Naive thymus-derived CD4-positive, alpha-beta T cell (primary cell): ENCODE measurements at regions of chr1 and their contacts with region 1.

Region 1: GRCh38 chr1:40774266-40774998 is 9.2 kb upstream of the KCNQ4 start:
- DNase-seq: peak; percentile 46 to 70 (median 54)
- ATAC-seq: peak; percentile 72
- H3K4me3 ChIP-seq: no peak overlapping the region
- H3K4me3 Mint-ChIP-seq: no peak overlapping the region
- H3K27ac ChIP-seq: no peak overlapping the region
- H3K27ac Mint-ChIP-seq: peak overlapping the region in 3 of 9 donors; percentile 1 to 61 (median 10)
- H3K4me1 ChIP-seq: no peaks in the 10 kb centered on the region
- H3K4me1 Mint-ChIP-seq: peaks cover 0 to 25% (median 2%) of the 10 kb centered on the region in 7 donors
- H3K27me3 ChIP-seq: no peaks in the 10 kb centered on the region
- H3K27me3 Mint-ChIP-seq: no peaks in the 10 kb centered on the region

Region 2: DNA sequence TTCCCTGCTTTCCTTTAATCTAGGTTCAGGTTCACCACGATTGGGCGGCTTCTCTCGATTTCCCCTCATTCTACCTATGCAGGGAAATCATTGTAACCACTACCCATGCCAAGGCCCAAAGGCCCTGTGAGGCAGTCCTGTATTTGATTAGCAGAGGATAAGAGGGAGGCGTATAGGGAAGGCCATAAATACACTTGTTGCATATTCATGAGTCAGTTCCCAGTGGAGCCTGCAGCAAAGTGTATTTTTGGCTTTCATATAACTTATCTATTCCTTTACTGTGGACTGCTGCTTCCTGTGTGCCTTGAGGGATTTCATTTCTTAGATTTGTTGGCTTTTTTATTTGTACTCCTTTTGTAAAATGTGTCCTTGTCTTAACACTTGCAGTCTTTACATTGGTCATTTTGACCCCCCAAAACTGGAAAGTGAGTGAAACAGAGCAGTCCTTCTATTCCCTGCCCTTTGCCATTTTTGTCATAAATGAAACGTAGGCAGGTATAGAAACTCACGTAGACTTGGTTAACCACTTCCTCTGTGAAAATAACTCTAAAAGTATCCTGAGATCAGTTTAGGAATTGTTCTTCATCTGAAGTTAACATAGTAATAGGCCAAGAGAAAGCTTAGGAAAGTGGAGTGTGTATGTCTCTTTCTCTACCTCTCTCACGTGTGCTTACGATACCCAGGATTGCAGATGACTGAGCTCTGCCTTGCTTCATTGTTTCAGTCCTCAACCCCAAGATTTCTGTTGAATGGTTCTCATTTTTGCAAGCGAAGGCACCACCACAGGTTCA is 10.5 kb before region 1 on chr1:
- CTCF ChIA-PET with region 1: interaction called, 11 read pairs
- POLR2A ChIA-PET with region 1: interaction called, 3 read pairs
- intact Hi-C with region 1: no loop called
- DNase-seq: peak in 6 of 9 donors; percentile 19 to 48 (median 39)
- ATAC-seq: peak; percentile 56
- H3K4me3 ChIP-seq: no peak overlapping the region
- H3K4me3 Mint-ChIP-seq: peak overlapping the region; percentile 12 to 81 (median 62)
- H3K27ac ChIP-seq: peak overlapping the region; percentile 60
- H3K27ac Mint-ChIP-seq: peak overlapping the region; percentile 75 to 91 (median 89)
- H3K4me1 ChIP-seq: peaks cover 0 to 31% of the 10 kb centered on the region in 2 donors
- H3K4me1 Mint-ChIP-seq: peaks cover 22 to 52% (median 46%) of the 10 kb centered on the region in 7 donors
- H3K27me3 ChIP-seq: no peaks in the 10 kb centered on the region
- H3K27me3 Mint-ChIP-seq: no peaks in the 10 kb centered on the region

Region 3: DNA sequence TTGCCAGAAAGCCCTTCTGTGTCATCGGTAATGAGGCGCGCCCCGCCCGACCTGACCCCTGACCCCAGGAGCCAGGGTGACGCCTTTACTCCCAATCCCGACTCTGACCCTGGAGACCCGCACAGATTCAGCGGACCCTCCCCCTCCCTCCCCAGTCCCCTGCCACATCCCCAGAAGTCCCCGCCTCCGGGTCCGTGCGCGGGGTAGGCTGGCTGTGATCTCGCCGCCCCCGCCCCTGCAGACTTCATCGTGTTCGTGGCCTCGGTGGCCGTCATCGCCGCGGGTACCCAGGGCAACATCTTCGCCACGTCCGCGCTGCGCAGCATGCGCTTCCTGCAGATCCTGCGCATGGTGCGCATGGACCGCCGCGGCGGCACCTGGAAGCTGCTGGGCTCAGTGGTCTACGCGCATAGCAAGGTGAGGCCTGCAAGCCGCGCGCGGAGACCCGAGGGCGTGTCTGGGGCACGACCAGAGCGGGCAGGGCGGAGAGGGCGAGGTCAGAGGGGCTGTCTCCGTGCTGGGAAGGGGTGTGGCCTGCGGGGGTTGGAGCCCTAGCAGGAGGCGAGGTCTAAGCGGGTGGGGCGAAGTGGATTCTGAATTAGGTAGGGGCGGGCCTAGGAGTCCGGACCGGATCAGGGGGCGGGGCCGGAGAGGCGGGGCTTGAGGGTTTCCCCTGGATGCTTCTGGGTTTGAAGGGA is 44.0 kb after region 1 on chr1:
- CTCF ChIA-PET with region 1: interaction called, 4 read pairs
- POLR2A ChIA-PET with region 1: no interaction called
- intact Hi-C with region 1: loop called in 1 of 2 experiments (anchors 1 kb)
- DNase-seq: peak; percentile 66 to 90 (median 86)
- ATAC-seq: peak; percentile 98
- H3K4me3 ChIP-seq: peak overlapping the region; percentile 68
- H3K4me3 Mint-ChIP-seq: peak overlapping the region; percentile 76 to 89 (median 83)
- H3K27ac ChIP-seq: peak overlapping the region; percentile 50
- H3K27ac Mint-ChIP-seq: peak overlapping the region; percentile 74 to 89 (median 83)
- H3K4me1 ChIP-seq: peaks cover 0 to 5% of the 10 kb centered on the region in 2 donors
- H3K4me1 Mint-ChIP-seq: peaks cover 0 to 21% (median 11%) of the 10 kb centered on the region in 7 donors
- H3K27me3 ChIP-seq: no peaks in the 10 kb centered on the region
- H3K27me3 Mint-ChIP-seq: peaks cover 0 to 8% (median 0%) of the 10 kb centered on the region in 5 donors

Region 4: GRCh38 chr1:40951943-40952743 is 177.7 kb after region 1 on chr1:
- CTCF ChIA-PET with region 1: interaction called, 10 read pairs
- POLR2A ChIA-PET with region 1: no interaction called
- intact Hi-C with region 1: loop called (anchors 1 to 5 kb)
- DNase-seq: peak; percentile 24 to 67 (median 39)
- ATAC-seq: peak; percentile 71
- H3K4me3 ChIP-seq: no peak overlapping the region
- H3K4me3 Mint-ChIP-seq: peak overlapping the region in 4 of 10 donors; percentile 18 to 49 (median 28)
- H3K27ac ChIP-seq: no peak overlapping the region
- H3K27ac Mint-ChIP-seq: no peak overlapping the region
- H3K4me1 ChIP-seq: peaks cover 0 to 3% of the 10 kb centered on the region in 2 donors
- H3K4me1 Mint-ChIP-seq: peaks cover 5 to 19% (median 8%) of the 10 kb centered on the region in 7 donors
- H3K27me3 ChIP-seq: no peaks in the 10 kb centered on the region
- H3K27me3 Mint-ChIP-seq: peaks cover 9 to 34% (median 29%) of the 10 kb centered on the region in 5 donors

Region 5: GRCh38 chr1:41056907-41057306 is 282.5 kb after region 1 on chr1:
- CTCF ChIA-PET with region 1: no interaction called
- POLR2A ChIA-PET with region 1: no interaction called
- intact Hi-C with region 1: no loop called
- DNase-seq: no peak
- ATAC-seq: no peak
- H3K4me3 ChIP-seq: no peak overlapping the region
- H3K4me3 Mint-ChIP-seq: no peak overlapping the region
- H3K27ac ChIP-seq: no peak overlapping the region
- H3K27ac Mint-ChIP-seq: no peak overlapping the region
- H3K4me1 ChIP-seq: no peaks in the 10 kb centered on the region
- H3K4me1 Mint-ChIP-seq: no peaks in the 10 kb centered on the region
- H3K27me3 ChIP-seq: no peaks in the 10 kb centered on the region
- H3K27me3 Mint-ChIP-seq: no peaks in the 10 kb centered on the region